Ascending aorta (tissue), 2 donors: ENCODE measurements at regions of chr16 and their contacts with region 1.

Region 1: GRCh38 chr16:17184026-17184425 is 286.7 kb downstream of the XYLT1 start:
- DNase-seq: no peak
- H3K4me3 ChIP-seq: no peak overlapping the region
- H3K27ac ChIP-seq: no peak overlapping the region
- H3K4me1 ChIP-seq: no peaks in the 10 kb centered on the region
- H3K27me3 ChIP-seq: no peaks in the 10 kb centered on the region
- CTCF ChIP-seq: no peak

Region 2: DNA sequence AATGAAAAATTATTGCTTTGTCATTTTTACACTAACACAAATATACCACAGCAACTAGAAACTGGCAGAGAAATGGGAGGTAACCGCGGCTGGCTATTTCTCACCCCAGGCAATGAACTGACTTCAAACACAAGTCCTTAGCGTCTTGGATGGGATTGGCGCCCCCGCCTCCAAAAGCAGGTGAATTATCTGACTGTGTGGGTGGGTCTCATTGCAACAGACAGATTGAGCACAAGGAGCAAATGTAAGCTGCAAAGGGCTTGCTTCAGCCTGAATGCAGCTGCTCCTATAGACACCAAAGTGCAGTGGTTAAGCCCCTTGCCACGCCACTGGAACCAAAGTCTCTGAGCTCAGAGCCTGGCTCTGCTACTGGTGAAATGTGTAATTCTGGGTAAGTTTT is 61.8 kb after region 1 on chr16:
- intact Hi-C with region 1: loop called (anchors 5 kb)
- DNase-seq: no peak
- H3K4me3 ChIP-seq: no peak overlapping the region
- H3K27ac ChIP-seq: no peak overlapping the region
- H3K4me1 ChIP-seq: no peaks in the 10 kb centered on the region
- H3K27me3 ChIP-seq: no peaks in the 10 kb centered on the region
- CTCF ChIP-seq: no peak